Thyroid gland (tissue), 4 donors: ENCODE measurements at regions of chr2 and their contacts with region 1.

Region 1: GRCh38 chr2:200901459-200902072 is 12.4 kb downstream of the NIF3L1 start:
- DNase-seq: peak; percentile 66 to 70
- H3K4me3 ChIP-seq: no peak overlapping the region
- H3K27ac ChIP-seq: no peak overlapping the region
- H3K4me1 ChIP-seq: no peaks in the 10 kb centered on the region
- H3K27me3 ChIP-seq: no peaks in the 10 kb centered on the region
- CTCF ChIP-seq: peak in 5 of 6 experiments; percentile 50 to 87 (median 70)
- POLR2A ChIP-seq: no peak

Region 2: DNA sequence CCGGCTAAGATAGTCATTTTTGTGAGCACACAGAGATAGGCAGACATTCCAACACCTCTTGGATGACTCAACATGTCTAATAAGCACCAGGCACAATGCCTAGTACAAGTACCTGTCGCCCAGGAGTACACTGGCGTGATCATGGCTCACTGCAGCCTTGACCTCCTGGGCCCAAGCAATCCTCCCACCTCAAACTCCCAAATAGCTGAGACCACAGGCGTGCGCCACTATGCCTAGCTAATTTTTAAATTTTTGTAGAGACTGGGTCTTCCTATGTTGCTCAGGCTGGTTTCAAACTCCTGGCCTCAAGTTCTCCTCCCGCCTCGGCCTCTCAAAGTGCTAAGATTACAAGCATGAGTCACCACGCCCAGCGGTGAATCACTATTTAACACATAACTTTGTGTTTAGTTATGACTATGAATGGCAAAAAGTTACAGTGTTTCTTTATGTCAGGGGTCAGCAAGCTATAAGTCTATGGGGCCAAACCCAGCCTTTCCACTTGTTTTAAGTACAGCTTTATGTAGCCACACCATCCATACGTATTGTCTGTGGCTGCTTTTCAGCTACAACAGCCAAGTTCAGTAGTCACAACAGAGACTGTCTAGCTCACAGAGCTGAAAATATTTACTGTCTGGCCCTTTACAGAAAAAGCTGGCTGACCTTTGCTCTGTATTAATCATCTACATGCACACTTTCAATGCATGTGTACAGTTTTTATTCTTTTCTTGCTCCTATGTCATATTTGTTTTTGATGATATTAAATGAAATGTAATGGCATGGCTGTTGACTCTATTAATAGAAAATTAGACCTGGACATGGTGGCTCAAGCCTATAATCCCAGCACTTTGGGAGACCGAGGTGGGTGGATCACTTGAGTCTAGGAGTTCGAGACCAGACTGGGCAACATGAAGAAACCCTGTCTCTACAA is 43.2 kb after region 1 on chr2:
- intact Hi-C with region 1: no loop called
- DNase-seq: no peak
- H3K4me3 ChIP-seq: no peak overlapping the region
- H3K27ac ChIP-seq: no peak overlapping the region
- H3K4me1 ChIP-seq: no peaks in the 10 kb centered on the region
- H3K27me3 ChIP-seq: no peaks in the 10 kb centered on the region
- CTCF ChIP-seq: no peak
- POLR2A ChIP-seq: no peak

Region 3: DNA sequence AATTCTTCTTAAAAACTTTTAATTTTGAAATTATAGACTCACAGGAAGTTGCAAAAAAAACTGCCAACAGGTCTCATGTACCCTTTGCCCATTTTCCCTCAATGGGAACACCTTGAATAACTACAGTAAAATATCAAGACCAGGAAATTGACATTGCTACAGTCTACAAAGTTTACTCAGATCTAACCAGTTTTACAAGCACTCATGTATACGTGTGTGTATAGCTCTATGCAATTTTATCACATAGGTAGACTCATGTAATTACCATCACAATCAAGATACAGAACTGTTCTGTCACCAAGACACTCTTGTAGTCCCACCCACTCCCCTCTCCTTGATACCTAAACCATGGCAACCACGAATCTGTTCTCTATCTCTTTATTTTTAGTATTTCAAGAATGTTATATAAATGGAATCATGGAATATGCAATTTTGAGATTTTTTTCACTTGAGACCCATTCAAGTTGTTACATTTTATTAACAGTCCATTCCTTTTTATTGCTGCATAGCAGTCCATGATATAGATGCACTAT is 163.3 kb after region 1 on chr2:
- intact Hi-C with region 1: loop called (anchors 5 kb)
- DNase-seq: no peak
- H3K4me3 ChIP-seq: no peak overlapping the region
- H3K27ac ChIP-seq: no peak overlapping the region
- H3K4me1 ChIP-seq: peaks cover 5 to 11% of the 10 kb centered on the region in 2 donors
- H3K27me3 ChIP-seq: no peaks in the 10 kb centered on the region
- CTCF ChIP-seq: no peak
- POLR2A ChIP-seq: no peak

Region 4: GRCh38 chr2:201171259-201171814 is 269.8 kb after region 1 on chr2:
- intact Hi-C with region 1: loop called (anchors 10 kb)
- DNase-seq: no peak
- H3K4me3 ChIP-seq: no peak overlapping the region
- H3K27ac ChIP-seq: no peak overlapping the region
- H3K4me1 ChIP-seq: peaks cover 4 to 7% of the 10 kb centered on the region in 2 donors
- H3K27me3 ChIP-seq: no peaks in the 10 kb centered on the region
- CTCF ChIP-seq: no peak
- POLR2A ChIP-seq: no peak